T-cell (primary cell): ENCODE measurements at regions of chr3 and their contacts with region 1.

Region 1: DNA sequence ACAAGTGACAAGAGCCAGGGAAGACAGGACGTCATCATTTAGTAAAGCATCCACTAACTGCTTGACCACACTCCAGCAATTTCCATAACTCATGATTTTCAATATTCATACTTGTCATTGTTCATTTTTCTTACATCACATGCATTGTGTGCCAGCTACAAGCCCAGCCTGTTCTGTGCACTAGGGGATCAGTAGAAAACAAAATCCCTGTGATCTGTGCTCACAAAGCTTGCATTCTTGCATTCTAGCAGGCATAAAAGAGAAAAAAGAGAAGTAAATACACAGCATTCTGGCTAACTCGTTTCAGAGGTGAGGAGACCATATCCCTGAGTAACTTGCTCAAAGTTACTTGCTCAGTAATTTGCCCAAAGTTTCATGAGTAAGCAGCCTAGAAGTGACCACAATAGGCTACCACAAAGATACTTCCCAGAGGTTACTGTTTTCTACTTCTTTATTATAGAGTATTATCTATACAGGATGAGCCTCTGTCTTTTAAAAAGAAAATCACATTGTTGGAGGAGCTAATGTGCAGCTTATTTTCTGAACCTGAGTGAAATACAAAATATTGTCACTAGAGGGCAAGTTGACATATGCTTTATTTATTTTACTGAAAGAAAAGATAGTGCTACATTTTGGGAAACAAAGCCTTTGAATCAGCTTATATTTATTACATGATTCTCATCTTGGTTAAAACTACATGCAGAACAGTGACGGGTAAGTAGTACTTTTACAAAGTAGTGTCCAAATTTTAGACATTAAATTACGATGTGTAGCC is 701.4 kb upstream of the LMCD1 start:
- DNase-seq: peak in 1 of 35 experiments; percentile 34
- ATAC-seq: no peak
- H3K4me3 ChIP-seq: no peak overlapping the region
- H3K4me3 Mint-ChIP-seq: no peak overlapping the region
- H3K27ac ChIP-seq: no peak overlapping the region
- H3K27ac Mint-ChIP-seq: no peak overlapping the region
- H3K4me1 ChIP-seq: no peaks in the 10 kb centered on the region
- H3K4me1 Mint-ChIP-seq: no peaks in the 10 kb centered on the region
- H3K27me3 ChIP-seq: no peaks in the 10 kb centered on the region
- H3K27me3 Mint-ChIP-seq: no peaks in the 10 kb centered on the region

Region 2: DNA sequence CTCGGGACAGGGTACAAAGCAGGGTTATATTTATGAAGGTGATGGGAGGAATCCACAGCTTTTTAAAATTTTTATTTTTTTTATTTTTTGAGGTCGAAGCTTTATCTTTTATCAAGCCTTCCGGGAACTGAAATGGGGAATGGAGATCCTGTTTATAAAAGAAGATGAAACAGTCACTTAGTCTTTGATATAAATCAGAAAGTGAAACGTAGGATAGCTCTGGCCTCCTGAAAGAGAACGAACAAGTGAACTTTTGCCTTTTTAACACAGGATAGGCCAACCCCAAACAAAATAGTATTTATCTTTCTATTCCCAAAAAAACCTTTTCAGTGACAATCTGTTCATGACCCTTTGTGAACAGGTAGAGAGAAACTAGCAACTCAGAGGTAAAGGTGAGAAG is 67.4 kb after region 1 on chr3:
- CTCF ChIA-PET with region 1: no interaction called
- POLR2A ChIA-PET with region 1: no interaction called
- DNase-seq: no peak
- ATAC-seq: peak in 3 of 4 experiments; percentile 43 to 63 (median 56)
- H3K4me3 ChIP-seq: no peak overlapping the region
- H3K4me3 Mint-ChIP-seq: peak overlapping the region in 1 of 3 donors; percentile 22
- H3K27ac ChIP-seq: peak overlapping the region; percentile 6
- H3K27ac Mint-ChIP-seq: peak overlapping the region; percentile 68 to 71
- H3K4me1 ChIP-seq: peaks cover 3 to 4% of the 10 kb centered on the region in 2 experiments
- H3K4me1 Mint-ChIP-seq: peaks cover 22 to 33% (median 23%) of the 10 kb centered on the region in 3 donors
- H3K27me3 ChIP-seq: no peaks in the 10 kb centered on the region
- H3K27me3 Mint-ChIP-seq: no peaks in the 10 kb centered on the region

Region 3: GRCh38 chr3:8103954-8104353 is 303.8 kb after region 1 on chr3:
- CTCF ChIA-PET with region 1: interaction called in 1 of 2 experiments, 10 read pairs
- POLR2A ChIA-PET with region 1: no interaction called
- DNase-seq: no peak
- ATAC-seq: no peak
- H3K4me3 ChIP-seq: no peak overlapping the region
- H3K4me3 Mint-ChIP-seq: no peak overlapping the region
- H3K27ac ChIP-seq: no peak overlapping the region
- H3K27ac Mint-ChIP-seq: no peak overlapping the region
- H3K4me1 ChIP-seq: no peaks in the 10 kb centered on the region
- H3K4me1 Mint-ChIP-seq: peaks cover 6 to 8% (median 6%) of the 10 kb centered on the region in 3 donors
- H3K27me3 ChIP-seq: no peaks in the 10 kb centered on the region
- H3K27me3 Mint-ChIP-seq: no peaks in the 10 kb centered on the region

Region 4: DNA sequence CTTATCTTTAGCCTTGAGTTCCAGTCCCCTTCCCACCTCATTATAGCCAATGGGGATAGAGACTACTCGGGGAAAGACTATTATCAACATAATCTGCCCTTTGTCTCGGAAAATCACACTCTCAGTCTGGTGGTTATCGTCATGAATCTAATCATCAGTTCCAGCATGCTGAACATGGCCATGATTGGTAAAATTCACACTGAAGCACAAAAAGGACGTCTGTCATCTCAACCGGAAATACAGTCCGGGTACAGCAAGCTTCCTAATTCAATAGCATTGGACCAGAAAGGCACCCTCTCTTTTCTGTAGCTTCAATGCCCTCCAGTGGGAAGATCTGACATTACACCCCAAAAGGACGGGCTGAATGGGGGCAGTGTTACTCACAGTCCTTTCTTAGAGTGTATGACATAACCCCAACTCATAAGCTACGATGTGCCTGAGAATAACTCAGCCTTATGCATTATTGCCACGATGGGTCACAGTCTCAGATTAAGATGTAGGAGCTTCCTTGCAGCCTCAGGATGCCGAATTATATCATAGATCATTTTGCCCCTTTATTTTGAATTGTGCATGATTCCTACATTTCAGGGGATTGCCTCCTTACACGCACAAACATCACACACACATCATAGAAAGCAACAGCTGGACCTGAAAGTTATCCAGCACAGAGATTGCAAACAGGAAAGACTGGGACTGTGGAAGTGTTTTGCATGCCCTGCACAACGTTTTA is 311.0 kb after region 1 on chr3:
- CTCF ChIA-PET with region 1: interaction called, 7 to 26 read pairs
- POLR2A ChIA-PET with region 1: no interaction called
- DNase-seq: peak; percentile 2 to 63 (median 30)
- ATAC-seq: peak; percentile 70 to 88 (median 78)
- H3K4me3 ChIP-seq: no peak overlapping the region
- H3K4me3 Mint-ChIP-seq: peak overlapping the region; percentile 32 to 42 (median 36)
- H3K27ac ChIP-seq: no peak overlapping the region
- H3K27ac Mint-ChIP-seq: no peak overlapping the region
- H3K4me1 ChIP-seq: peaks cover 2 to 4% of the 10 kb centered on the region in 2 experiments
- H3K4me1 Mint-ChIP-seq: peaks cover 4 to 8% (median 5%) of the 10 kb centered on the region in 3 donors
- H3K27me3 ChIP-seq: no peaks in the 10 kb centered on the region
- H3K27me3 Mint-ChIP-seq: peaks cover 0 to 15% of the 10 kb centered on the region in 2 donors